Mammary epithelial cell (primary cell): ENCODE measurements at regions of chr14 and their contacts with region 1.

Region 1: DNA sequence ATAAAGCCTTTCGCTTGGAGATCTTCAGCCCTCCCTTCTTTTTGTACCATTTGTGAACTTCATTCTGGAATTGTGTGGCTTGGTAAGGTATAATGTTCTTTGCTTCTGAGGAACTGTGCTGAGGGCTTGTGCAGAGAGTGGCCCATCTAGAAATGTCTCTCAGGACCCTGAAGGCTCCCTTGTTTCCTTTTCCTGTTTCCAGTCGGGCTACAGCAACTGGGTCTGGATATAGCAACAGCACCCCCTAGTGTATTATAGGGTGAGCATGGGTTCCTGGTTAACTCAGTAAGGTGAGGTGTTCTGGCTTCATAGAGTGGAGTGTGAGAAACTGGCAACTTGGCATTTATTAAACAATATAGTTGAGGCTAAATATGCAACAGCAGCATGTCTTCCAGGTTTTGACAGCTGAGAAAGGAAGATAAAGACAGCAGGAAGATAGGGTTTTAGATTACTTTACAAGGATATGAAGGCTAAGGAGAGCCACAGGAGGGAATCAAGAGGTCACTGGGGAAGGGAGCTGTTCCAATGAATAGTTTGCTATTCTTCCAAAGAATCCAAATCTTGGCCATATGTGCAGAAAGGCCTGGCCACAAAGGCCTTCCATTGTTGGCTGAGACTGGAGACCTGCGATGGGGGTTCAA is 49.1 kb upstream of the RNU6-8 start:
- DNase-seq: peak; percentile 56
- H3K4me3 ChIP-seq: no peak overlapping the region
- H3K27ac ChIP-seq: no peak overlapping the region
- H3K4me1 ChIP-seq: peaks cover 11% of the 10 kb centered on the region
- H3K27me3 ChIP-seq: no peaks in the 10 kb centered on the region
- CTCF ChIP-seq: peak; percentile 90 to 95

Region 2: GRCh38 chr14:31360919-31361662 is 891.1 kb before region 1 on chr14:
- CTCF ChIA-PET with region 1: no interaction called
- dilution Hi-C with region 1: no loop called
- in situ Hi-C with region 1: no loop called
- intact Hi-C with region 1: loop called (anchors 5 kb)
- DNase-seq: peak; percentile 79
- H3K4me3 ChIP-seq: no peak overlapping the region
- H3K27ac ChIP-seq: peak overlapping the region; percentile 98
- H3K4me1 ChIP-seq: peaks cover 18% of the 10 kb centered on the region
- H3K27me3 ChIP-seq: no peaks in the 10 kb centered on the region
- CTCF ChIP-seq: no peak

Region 3: DNA sequence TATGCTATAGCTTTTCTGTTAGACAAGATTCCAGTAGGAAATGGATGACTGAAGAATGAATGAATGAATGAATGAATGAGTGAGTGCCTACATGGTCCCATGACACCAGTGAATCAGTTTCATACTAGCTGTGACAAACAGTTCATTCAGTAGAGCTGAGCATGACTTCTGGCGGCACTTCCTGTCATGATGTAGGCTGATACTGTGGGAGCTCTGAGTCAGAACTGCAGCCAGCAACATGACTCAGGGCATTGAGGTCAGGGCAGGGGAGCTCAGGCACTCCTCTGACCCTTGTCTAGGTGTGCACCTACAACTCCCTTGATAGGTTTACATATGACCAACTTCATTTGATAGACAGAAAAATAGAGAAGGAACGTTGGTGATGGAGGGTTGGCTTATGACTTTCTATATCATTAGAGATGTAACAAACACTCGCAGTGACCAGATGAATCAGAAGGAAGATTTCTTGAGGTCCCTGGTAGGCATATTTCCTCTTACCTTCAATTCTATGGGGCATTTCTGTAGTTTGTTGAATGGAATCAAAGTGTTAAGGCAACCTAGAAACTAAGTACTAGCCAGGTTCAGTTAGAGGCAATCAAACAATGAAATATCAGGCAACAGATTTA is 314.3 kb before region 1 on chr14:
- CTCF ChIA-PET with region 1: no interaction called
- dilution Hi-C with region 1: no loop called
- in situ Hi-C with region 1: loop called (anchors 10 kb)
- intact Hi-C with region 1: loop called (anchors 1 kb)
- DNase-seq: peak; percentile 99
- H3K4me3 ChIP-seq: no peak overlapping the region
- H3K27ac ChIP-seq: peak overlapping the region; percentile 93
- H3K4me1 ChIP-seq: peaks cover 21% of the 10 kb centered on the region
- H3K27me3 ChIP-seq: no peaks in the 10 kb centered on the region
- CTCF ChIP-seq: no peak

Region 4: GRCh38 chr14:32167907-32168306 is 84.2 kb before region 1 on chr14:
- CTCF ChIA-PET with region 1: no interaction called
- dilution Hi-C with region 1: no loop called
- in situ Hi-C with region 1: no loop called
- intact Hi-C with region 1: loop called (anchors 5 kb)
- DNase-seq: peak; percentile 58
- H3K4me3 ChIP-seq: no peak overlapping the region
- H3K27ac ChIP-seq: no peak overlapping the region
- H3K4me1 ChIP-seq: no peaks in the 10 kb centered on the region
- H3K27me3 ChIP-seq: no peaks in the 10 kb centered on the region
- CTCF ChIP-seq: no peak

Region 5: DNA sequence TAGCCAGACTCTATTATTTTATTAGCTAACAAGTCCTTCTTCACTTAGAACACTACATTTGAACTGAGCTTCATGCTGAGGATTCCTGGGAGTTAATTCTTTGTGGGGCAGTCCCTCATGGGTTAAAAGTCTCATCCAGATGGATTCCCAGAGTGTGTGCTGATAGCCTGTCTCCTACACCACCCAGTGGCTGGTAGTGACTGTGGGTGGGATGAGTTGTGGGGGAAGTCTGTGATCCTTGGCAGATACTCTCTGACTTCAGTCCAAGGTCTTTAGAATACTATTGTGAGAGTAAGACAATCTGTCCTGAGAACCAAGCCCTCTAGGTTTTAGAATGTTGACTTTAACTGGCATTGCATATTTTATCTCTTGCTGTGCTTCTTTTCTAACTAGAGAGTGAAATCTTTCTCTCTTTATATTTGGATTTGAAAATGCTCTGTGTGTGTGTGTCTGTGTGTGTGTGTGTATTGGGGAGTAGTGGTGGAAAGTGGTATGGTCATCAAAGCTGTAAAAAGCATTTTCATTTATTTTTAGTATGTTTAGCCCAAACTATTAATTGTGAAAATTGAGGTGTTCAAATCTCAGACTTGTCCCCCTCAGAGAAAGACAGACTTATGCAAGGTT is 114.2 kb after region 1 on chr14:
- CTCF ChIA-PET with region 1: no interaction called
- dilution Hi-C with region 1: no loop called
- in situ Hi-C with region 1: loop called in 1 of 2 experiments (anchors 10 kb)
- intact Hi-C with region 1: no loop called
- DNase-seq: no peak
- H3K4me3 ChIP-seq: no peak overlapping the region
- H3K27ac ChIP-seq: no peak overlapping the region
- H3K4me1 ChIP-seq: peaks cover 24% of the 10 kb centered on the region
- H3K27me3 ChIP-seq: no peaks in the 10 kb centered on the region
- CTCF ChIP-seq: peak; percentile 6 to 24

Region 6: DNA sequence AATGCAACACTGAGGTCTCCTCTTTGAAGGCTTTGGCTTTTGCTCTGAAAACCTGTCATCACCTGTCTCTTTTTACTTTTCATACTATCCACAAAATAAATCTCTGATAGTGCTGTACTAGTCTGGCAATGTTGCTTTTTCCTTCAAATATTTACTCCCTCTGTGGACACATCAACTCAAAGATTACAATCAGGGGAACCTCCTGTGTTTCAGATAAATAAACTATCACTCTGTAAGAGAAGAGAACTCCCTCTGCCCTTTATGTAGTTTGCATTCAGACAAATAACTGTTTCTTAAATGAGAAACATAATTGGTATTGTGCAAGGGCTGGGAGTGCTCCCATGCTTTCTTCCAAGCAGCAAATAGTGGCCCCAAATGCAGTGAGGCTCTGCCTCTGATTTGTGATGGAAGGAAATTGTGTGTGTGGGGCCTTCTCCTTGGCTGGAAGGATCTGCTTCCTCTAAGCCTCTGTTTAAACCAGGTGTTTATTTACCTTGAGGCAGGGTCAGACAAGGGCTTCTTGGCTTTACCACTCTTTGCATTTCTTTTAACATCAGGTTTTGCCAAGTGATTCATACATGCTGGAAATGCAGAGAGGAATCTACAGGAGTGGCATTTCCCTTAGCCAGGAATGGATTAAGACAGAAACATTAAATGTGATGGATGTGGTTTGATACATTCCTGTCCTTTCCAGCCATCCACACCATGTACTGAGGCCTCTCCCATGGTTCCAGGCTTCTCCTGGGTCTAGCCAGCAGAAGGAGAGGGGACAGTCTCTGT is 145.9 kb after region 1 on chr14:
- CTCF ChIA-PET with region 1: no interaction called
- dilution Hi-C with region 1: no loop called
- in situ Hi-C with region 1: no loop called
- intact Hi-C with region 1: no loop called
- DNase-seq: peak; percentile 82
- H3K4me3 ChIP-seq: no peak overlapping the region
- H3K27ac ChIP-seq: no peak overlapping the region
- H3K4me1 ChIP-seq: peaks cover 22% of the 10 kb centered on the region
- H3K27me3 ChIP-seq: no peaks in the 10 kb centered on the region
- CTCF ChIP-seq: no peak

Region 7: GRCh38 chr14:32480337-32480736 is 228.2 kb after region 1 on chr14:
- CTCF ChIA-PET with region 1: no interaction called
- dilution Hi-C with region 1: no loop called
- in situ Hi-C with region 1: no loop called
- intact Hi-C with region 1: no loop called
- DNase-seq: no peak
- H3K4me3 ChIP-seq: no peak overlapping the region
- H3K27ac ChIP-seq: no peak overlapping the region
- H3K4me1 ChIP-seq: peaks cover 13% of the 10 kb centered on the region
- H3K27me3 ChIP-seq: no peaks in the 10 kb centered on the region
- CTCF ChIP-seq: no peak

Region 8: DNA sequence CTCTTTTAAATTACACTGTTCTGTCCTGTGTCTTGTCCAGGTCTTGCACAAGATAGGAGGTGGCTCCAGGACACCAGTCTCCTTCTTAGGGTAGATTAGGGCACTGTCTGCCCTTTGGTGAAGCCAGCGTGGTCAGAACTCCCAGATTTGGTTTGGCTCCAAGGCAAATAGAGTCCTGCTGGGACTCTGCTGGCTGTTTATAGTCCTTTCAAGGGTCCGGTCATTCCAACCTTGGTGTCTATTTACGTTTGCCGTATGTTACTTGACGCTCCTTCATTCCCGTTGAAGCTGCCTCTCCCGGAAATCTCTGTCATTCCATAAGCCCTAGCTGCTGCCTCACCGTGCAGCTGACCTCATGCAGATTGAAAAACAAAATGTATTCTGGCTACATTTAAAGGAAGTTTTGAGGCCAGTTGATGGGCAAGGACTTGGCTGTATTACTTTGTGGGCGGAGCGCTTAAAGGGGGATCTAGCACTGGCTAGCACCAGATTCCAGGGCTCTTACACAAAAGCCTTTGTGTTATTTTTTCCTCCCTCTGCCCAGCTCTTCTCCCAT is 257.6 kb after region 1 on chr14:
- CTCF ChIA-PET with region 1: interaction called, 4 read pairs
- dilution Hi-C with region 1: no loop called
- in situ Hi-C with region 1: loop called in 1 of 2 experiments (anchors 5 kb)
- intact Hi-C with region 1: loop called (anchors 2 kb)
- DNase-seq: peak; percentile 93
- H3K4me3 ChIP-seq: peak overlapping the region in 1 of 3 experiments; percentile 10
- H3K27ac ChIP-seq: peak overlapping the region; percentile 87
- H3K4me1 ChIP-seq: peaks cover 41% of the 10 kb centered on the region
- H3K27me3 ChIP-seq: no peaks in the 10 kb centered on the region
- CTCF ChIP-seq: no peak